ENCODE measurements at regions of chr1 and their contacts with region 1.

Region 1: DNA sequence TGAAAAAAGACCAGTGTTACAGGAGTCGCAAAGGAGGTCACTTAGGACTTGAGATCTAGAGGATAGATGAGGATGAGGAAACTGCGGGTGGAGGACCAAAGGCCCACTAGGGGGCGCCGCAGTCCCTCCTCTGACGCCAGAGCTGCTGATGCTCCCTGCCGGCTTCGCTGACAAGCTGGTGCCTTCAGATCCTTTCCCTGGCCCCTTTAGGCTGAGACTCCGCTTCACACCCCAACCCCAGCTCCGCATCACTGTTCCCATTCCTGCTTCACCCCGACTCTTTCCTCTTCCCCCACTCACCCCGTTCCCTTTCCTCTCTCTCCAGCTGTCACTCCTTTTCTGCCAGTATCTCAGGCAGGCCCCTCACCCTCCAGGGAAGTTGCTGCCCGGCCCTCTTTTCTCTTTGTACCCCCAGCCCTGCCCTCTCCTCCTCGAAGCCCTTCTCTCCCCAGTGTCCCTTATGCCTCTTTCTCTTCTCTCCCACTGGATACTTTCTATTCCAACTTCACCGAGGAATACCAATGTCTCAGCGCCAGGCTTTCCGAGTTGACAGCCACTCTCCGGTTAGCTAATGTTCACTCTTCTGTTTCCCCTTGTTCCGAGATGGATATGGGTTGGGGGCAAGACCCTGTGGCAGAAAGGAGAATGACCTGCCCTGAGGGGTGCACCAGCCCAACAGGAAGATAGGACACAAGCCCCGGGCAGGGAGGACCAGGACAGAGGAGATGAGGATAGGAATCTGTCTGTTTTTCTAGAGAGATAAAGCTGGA is 4.5 kb downstream of the KCNJ9 start:
- DNase-seq: peak; percentile 91
- H3K4me3 ChIP-seq: no peak overlapping the region
- H3K27ac ChIP-seq: no peak overlapping the region
- H3K4me1 ChIP-seq: peaks cover 0 to 13% of the 10 kb centered on the region in 2 experiments; a peak in 1 of 4 replicates
- H3K27me3 ChIP-seq: peaks cover 22% of the 10 kb centered on the region; the same call in 1 of the 2 replicates
- CTCF ChIP-seq: peak; percentile 78
- EP300 ChIP-seq: no peak
- RAD21 ChIP-seq: peak; percentile 76

Region 2: GRCh38 chr1:160046494-160047110 is 39.3 kb before region 1 on chr1:
- CTCF ChIA-PET with region 1: interaction called, 163 read pairs
- POLR2A ChIA-PET with region 1: interaction called, 3 read pairs
- DNase-seq: peak; percentile 80
- H3K4me3 ChIP-seq: no peak overlapping the region
- H3K27ac ChIP-seq: no peak overlapping the region
- H3K4me1 ChIP-seq: peaks cover 0 to 11% of the 10 kb centered on the region in 2 experiments; a peak in 2 of 4 replicates
- H3K27me3 ChIP-seq: peaks cover 30% of the 10 kb centered on the region; the same call in 1 of the 2 replicates
- CTCF ChIP-seq: peak; percentile 67
- EP300 ChIP-seq: peak in 1 of 2 experiments; percentile 27; a peak in 1 of 4 replicates
- RAD21 ChIP-seq: peak; percentile 77

Region 3: DNA sequence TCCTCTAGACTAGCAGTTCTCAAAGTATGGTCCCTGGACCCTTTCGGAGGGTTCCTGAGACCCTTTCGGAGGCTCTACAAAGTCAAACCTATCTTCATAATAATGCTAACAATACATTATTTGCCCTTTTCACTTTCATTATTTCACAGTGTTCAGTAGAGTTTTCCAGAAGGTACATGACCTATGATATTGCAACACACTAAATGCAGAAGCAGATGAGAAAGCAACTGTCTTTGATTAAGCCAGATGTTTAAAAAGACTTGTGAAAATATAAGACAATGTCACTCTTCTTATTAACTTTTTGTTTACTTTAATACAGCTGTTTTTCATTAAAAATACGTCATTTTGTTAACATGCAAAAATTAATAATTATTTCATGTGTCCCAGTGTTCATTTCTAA is 21.7 kb before region 1 on chr1:
- CTCF ChIA-PET with region 1: interaction called, 76 read pairs
- POLR2A ChIA-PET with region 1: no interaction called
- DNase-seq: no peak
- H3K4me3 ChIP-seq: no peak overlapping the region
- H3K27ac ChIP-seq: no peak overlapping the region
- H3K4me1 ChIP-seq: peaks cover 0 to 9% of the 10 kb centered on the region in 2 experiments; a peak in 1 of 4 replicates
- H3K27me3 ChIP-seq: peaks cover 51% of the 10 kb centered on the region
- CTCF ChIP-seq: no peak
- EP300 ChIP-seq: no peak
- RAD21 ChIP-seq: no peak

Region 4: GRCh38 chr1:160117709-160118183 is 31.9 kb after region 1 on chr1:
- CTCF ChIA-PET with region 1: interaction called, 10 read pairs
- POLR2A ChIA-PET with region 1: no interaction called
- DNase-seq: no peak
- H3K4me3 ChIP-seq: no peak overlapping the region
- H3K27ac ChIP-seq: no peak overlapping the region
- H3K4me1 ChIP-seq: no peaks in the 10 kb centered on the region
- H3K27me3 ChIP-seq: peaks cover 11% of the 10 kb centered on the region; the same call in 1 of the 2 replicates
- CTCF ChIP-seq: no peak
- EP300 ChIP-seq: no peak
- RAD21 ChIP-seq: no peak